Activated T-helper 2 cell treated with anti-CD3 and anti-CD28 coated beads, Interferon-gamma antibody, Interleukin-2, Interleukin-4, amounts not matched to agents 10 μg/mL and 5 μg/mL and 100 μg/mL, durations not matched to agents 14 hours and 24 hours and 36 hours (primary cell): ENCODE measurements at regions of chr3 and their contacts with region 1.

Region 1: DNA sequence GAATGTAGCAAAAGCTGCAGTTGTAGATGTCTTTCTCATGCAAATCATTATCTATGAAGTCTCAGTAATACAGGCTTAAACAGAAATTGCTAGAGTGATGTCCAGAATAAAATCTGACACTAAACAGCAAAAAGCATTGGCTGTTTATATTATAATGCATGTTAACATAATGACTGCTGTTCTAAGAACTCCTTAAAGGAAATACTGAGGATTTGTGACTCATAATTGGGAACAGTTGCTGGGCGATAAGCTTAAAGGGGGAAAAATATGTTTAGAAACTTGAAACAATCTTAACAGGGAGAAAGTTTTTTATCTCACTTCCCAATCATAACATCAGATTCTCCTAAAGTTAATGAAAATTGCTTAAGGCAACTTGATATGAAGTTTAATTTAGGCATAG is 17.5 kb downstream of the TIPARP start:
- DNase-seq: no peak
- H3K4me3 Mint-ChIP-seq: no peak overlapping the region
- H3K27ac Mint-ChIP-seq: no peak overlapping the region
- H3K4me1 Mint-ChIP-seq: peaks cover 57% of the 10 kb centered on the region
- H3K27me3 Mint-ChIP-seq: no peaks in the 10 kb centered on the region

Region 2: GRCh38 chr3:156787926-156788663 is 96.2 kb after region 1 on chr3:
- intact Hi-C with region 1: loop called (anchors 2 kb)
- DNase-seq: no peak
- H3K4me3 Mint-ChIP-seq: no peak overlapping the region
- H3K27ac Mint-ChIP-seq: peak overlapping the region; percentile 40
- H3K4me1 Mint-ChIP-seq: peaks cover 55% of the 10 kb centered on the region
- H3K27me3 Mint-ChIP-seq: no peaks in the 10 kb centered on the region